Right cardiac atrium (tissue), 5 donors: ENCODE measurements at regions of chr3 and their contacts with region 1.

Region 1: DNA sequence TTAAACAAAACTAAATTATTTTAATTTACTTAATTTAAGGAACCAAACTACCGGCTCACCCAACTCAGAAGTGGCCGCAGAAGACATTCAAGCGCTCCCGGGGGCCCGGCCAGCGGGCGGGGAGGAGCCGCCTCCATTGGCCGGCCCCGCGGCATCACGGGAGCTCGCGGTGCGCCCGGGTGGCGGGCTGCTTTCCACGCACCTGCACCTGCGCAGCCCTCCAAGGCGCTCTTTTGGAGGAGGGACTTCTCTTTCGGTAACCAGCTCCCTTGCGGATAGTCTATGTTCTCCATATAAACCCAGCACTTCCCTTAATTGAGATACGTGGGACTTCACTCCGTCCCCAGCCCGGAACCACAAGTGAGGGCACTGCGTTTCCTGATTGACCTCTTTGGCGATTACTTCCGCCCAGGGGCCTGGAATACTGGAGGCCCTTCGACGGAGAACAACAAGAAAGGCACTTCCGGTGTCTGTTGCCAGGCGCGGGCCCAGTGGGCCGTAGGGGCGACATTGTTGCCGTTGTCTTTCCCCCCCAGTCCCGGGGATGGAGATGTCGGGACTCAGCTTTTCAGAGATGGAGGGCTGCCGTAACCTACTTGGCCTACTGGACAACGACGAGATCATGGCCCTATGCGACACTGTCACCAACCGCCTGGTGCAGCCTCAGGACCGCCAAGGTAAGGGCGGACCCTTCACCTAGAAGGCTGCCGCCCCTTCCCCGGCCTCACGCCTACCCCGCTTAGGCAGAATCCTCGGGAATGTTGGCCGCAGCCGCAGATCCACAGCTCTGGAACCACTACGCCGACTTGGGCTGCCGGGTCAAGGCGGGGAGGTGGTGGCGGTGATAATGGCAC is at the start of gene C3orf38:
- DNase-seq: peak; percentile 91 to 95 (median 94)
- ATAC-seq: peak; percentile 98 to 99
- H3K4me3 ChIP-seq: peak within 1 kb of the TSS; percentile 91
- H3K27ac ChIP-seq: peak within 1 kb of the TSS; percentile 92
- H3K4me1 ChIP-seq: no peaks in the 10 kb centered on the region
- H3K27me3 ChIP-seq: no peaks in the 10 kb centered on the region
- total RNA-seq, gene C3orf38: 17.7 to 22.4 (median 18.7) TPM

Region 2: GRCh38 chr3:88058591-88059368 is 91.0 kb before region 1 on chr3 and contains the starts of genes CGGBP1 and ZNF654:
- intact Hi-C with region 1: loop called in 1 of 4 experiments (anchors 5 kb)
- DNase-seq: peak; percentile 97 to 99 (median 98)
- ATAC-seq: peak; percentile 98
- H3K4me3 ChIP-seq: peak within 1 kb of the TSS; percentile 85
- H3K27ac ChIP-seq: peak within 1 kb of the TSS; percentile 99
- H3K4me1 ChIP-seq: no peaks in the 10 kb centered on the region
- H3K27me3 ChIP-seq: no peaks in the 10 kb centered on the region
- total RNA-seq, gene CGGBP1: 45.9 to 54.3 (median 50.0) TPM
- total RNA-seq, gene ZNF654: 10.4 to 13.8 (median 12.3) TPM

Region 3: DNA sequence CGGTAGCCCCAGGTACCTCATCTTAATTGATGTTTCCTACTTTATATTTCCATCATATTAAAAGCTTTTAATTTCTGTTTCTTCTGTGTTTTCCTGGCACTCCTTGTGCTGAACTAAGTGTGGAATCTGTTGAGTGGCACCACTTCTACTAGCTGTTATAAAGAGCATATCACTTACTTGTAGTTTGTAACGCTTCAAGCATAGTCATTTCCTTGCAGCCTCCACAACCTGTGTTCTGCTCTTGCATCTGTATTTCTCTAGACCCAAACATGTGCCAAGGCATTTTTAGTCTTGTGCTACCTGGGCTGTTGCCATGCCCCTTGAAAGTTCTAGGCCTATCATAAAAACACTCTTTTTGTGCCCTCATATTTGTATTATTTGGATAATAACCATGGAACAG is 74.7 kb before region 1 on chr3:
- intact Hi-C with region 1: no loop called
- DNase-seq: no peak
- ATAC-seq: no peak
- H3K4me3 ChIP-seq: no peak overlapping the region
- H3K27ac ChIP-seq: no peak overlapping the region
- H3K4me1 ChIP-seq: no peaks in the 10 kb centered on the region
- H3K27me3 ChIP-seq: no peaks in the 10 kb centered on the region

Region 4: GRCh38 chr3:88211096-88211890 is 61.6 kb after region 1 on chr3:
- intact Hi-C with region 1: no loop called
- DNase-seq: no peak
- ATAC-seq: no peak
- H3K4me3 ChIP-seq: no peak overlapping the region
- H3K27ac ChIP-seq: no peak overlapping the region
- H3K4me1 ChIP-seq: no peaks in the 10 kb centered on the region
- H3K27me3 ChIP-seq: no peaks in the 10 kb centered on the region

Region 5: GRCh38 chr3:88535563-88535962 is 385.8 kb after region 1 on chr3:
- intact Hi-C with region 1: no loop called
- DNase-seq: no peak
- ATAC-seq: no peak
- H3K4me3 ChIP-seq: no peak overlapping the region
- H3K27ac ChIP-seq: no peak overlapping the region
- H3K4me1 ChIP-seq: no peaks in the 10 kb centered on the region
- H3K27me3 ChIP-seq: no peaks in the 10 kb centered on the region